A673 (cell line): ENCODE measurements at regions of chr6 and their contacts with region 1.

Region 1: DNA sequence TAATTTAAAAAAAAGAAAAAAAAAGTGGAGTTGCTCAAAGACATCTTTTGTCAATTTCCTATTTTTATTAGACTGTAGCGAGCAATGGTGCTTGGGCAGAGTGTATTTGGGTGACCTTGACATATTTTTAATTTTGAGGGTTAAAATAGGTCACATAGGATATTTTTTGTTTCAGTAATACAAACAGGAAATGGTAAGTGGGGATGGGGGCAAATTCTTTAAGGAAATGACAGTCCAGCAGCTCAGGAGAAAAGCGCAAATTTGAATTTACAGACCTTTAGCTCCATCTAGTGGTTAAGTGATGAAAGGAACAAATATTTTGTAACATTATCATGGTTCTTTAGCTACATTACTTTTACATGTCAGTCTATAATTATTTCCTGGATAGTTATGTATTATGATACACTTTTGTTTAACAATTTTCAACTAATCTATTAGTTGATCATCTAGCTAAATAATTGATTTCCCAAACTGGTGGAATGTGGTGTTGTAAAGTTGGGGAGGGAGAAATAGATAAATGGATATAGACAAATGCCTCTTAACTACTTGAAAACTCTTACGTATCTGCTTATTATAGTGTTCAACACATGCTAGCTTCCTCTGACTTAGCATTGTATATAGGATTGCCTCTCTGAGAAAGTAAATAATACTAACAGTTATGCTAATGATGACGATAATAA is 10.0 kb downstream of the CITED2 start:
- DNase-seq: peak; percentile 85
- H3K4me3 ChIP-seq: no peak overlapping the region
- H3K27ac ChIP-seq: peak overlapping the region; percentile 31
- H3K4me1 ChIP-seq: peaks cover 32% of the 10 kb centered on the region
- H3K27me3 ChIP-seq: no peaks in the 10 kb centered on the region
- CTCF ChIP-seq: peak; percentile 66

Region 2: GRCh38 chr6:138622967-138623366 is 741.5 kb before region 1 on chr6:
- CTCF ChIA-PET with region 1: no interaction called
- POLR2A ChIA-PET with region 1: no interaction called
- intact Hi-C with region 1: no loop called
- DNase-seq: no peak
- H3K4me3 ChIP-seq: no peak overlapping the region
- H3K27ac ChIP-seq: no peak overlapping the region
- H3K4me1 ChIP-seq: no peaks in the 10 kb centered on the region
- H3K27me3 ChIP-seq: no peaks in the 10 kb centered on the region
- CTCF ChIP-seq: no peak

Region 3: DNA sequence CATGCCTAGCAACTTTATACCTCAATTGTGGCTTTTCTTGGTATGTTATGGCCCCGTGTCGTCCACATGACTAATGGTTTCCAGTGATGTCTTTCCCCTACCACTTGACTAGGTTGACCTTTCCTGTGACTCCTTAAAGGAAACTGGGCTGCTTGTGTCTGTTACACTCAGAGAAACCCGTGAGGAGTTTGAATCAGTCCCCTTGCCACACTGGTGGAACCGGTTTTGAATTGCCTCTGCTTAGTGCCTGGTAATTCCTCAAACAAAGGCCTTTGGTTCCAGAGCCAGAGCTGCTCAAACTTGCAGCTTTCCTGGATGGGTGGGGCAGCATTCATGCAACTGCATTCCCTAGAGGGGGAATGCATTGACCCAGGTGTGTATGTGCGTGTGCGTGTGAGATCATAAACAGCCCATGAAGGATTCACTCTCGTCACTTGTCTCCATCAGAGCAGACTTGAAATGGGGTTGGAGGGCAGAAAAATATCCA is 546.6 kb before region 1 on chr6:
- CTCF ChIA-PET with region 1: interaction called, 4 read pairs
- POLR2A ChIA-PET with region 1: interaction called, 3 read pairs
- intact Hi-C with region 1: loop called (anchors 1 kb)
- DNase-seq: no peak
- H3K4me3 ChIP-seq: no peak overlapping the region
- H3K27ac ChIP-seq: no peak overlapping the region
- H3K4me1 ChIP-seq: no peaks in the 10 kb centered on the region
- H3K27me3 ChIP-seq: no peaks in the 10 kb centered on the region
- CTCF ChIP-seq: no peak

Region 4: DNA sequence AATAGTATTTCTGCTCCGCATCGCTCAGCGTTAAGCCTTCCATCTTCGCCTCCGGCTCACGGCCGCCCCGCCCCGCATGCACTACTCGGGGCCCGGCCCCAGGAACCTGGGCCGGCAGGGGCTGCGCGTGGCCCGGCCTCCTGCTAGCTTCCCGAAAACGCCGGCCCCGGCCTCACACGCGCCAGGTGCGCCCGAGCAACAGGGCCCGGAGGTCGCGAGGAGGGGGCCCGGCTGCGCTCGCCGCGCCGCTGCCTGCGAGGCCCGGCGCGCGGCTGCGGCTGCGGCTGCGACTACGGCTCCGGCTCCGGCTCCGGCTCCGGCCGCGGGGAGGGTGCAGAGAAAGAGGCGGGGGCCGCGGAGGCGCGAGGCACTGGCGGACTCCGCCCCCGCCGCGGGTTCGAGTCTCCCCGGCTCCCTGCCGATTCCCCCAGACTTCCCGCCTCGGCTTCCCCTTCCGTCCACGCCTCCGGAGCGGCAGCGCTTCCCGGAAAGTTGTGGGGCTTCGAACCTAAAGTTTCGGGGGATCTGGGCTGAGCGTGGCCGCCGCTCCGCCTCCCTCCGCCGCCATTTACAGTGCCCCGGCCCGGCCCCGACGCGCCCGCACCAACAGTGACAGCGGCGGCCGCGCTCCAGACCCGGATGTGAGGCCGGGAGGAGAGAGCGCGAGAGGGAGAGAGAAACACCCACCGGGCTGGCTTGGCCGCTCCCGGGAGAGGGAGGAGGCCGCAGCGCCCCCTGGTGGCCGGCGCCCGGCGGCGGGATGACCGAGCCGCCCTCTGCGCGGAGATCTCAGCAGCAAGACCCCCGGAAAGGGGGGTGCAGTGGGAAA is 376.6 kb before region 1 on chr6 and contains the start of gene REPS1:
- CTCF ChIA-PET with region 1: no interaction called
- POLR2A ChIA-PET with region 1: no interaction called
- intact Hi-C with region 1: loop called (anchors 10 kb)
- DNase-seq: peak; percentile 95
- H3K4me3 ChIP-seq: peak within 1 kb of the TSS; percentile 72
- H3K27ac ChIP-seq: peak within 1 kb of the TSS; percentile 91
- H3K4me1 ChIP-seq: peaks cover 13% of the 10 kb centered on the region
- H3K27me3 ChIP-seq: no peaks in the 10 kb centered on the region
- CTCF ChIP-seq: peak; percentile 95
- total RNA-seq, gene REPS1: 63.4 and 64.9 TPM in 2 replicates

Region 5: DNA sequence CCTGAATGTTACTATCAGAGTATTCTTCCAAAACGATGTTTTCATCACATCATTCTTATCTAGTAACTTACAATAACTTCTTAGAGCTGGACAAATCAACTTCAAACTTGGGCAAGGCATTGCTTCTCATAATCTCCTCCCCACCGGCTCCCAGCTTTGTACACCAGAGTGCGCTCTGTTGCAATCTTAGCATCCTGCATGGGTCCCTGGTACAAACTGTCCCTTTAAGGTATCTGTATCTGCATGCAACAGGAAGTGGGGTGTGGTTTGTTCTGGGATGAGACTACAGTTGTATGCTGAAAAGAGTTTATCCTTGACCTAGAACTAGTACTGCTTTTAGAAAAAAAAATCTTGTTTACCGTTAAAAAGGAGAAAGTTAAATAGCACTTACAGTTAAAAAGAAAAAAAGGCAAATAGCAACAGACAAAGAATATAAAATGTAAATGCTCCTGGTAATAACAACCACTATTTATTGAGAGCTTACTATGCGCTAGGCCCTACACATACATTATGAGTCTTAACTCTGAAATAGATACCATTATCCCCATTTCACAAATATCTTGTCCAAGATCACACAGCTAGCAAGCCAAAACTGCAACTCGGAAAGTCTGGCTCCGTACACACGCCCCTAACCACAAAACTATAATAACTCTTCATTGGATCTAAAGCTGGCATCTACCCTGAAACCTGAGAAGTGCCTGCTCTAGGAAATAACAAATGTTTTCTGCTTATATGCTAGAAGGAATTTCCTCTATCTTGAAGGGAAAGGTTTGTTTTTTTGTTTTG is 239.4 kb before region 1 on chr6:
- CTCF ChIA-PET with region 1: interaction called, 3 read pairs
- POLR2A ChIA-PET with region 1: no interaction called
- intact Hi-C with region 1: loop called (anchors 1 kb)
- DNase-seq: peak; percentile 83
- H3K4me3 ChIP-seq: no peak overlapping the region
- H3K27ac ChIP-seq: no peak overlapping the region
- H3K4me1 ChIP-seq: peaks cover 10% of the 10 kb centered on the region
- H3K27me3 ChIP-seq: no peaks in the 10 kb centered on the region
- CTCF ChIP-seq: peak; percentile 74

Region 6: DNA sequence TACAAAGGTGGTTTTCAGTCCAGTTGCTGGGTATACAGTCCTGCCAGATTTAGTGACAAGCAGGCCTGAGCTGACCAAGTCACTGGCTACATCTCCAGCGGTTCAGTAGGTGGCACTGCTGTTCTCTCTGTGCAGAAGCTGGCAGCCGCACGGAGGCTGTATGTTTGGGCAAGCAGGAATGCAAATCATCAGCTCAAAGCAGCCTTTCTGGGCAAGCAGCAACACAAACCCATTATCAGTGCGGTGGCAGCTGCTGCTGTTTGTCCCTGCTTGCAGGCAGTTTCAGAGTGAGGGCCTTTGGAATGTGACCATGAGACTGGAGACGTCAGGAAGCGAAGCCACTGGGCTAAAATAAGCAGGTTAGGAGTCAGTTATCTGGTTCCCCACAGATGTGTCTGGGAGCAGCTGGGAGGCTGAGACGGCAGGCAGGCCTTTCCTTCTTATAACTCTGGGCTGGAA is 145.1 kb before region 1 on chr6:
- CTCF ChIA-PET with region 1: interaction called, 21 read pairs
- POLR2A ChIA-PET with region 1: no interaction called
- intact Hi-C with region 1: loop called (anchors 1 kb)
- DNase-seq: peak; percentile 90
- H3K4me3 ChIP-seq: no peak overlapping the region
- H3K27ac ChIP-seq: peak overlapping the region; percentile 49
- H3K4me1 ChIP-seq: peaks cover 8% of the 10 kb centered on the region
- H3K27me3 ChIP-seq: no peaks in the 10 kb centered on the region
- CTCF ChIP-seq: peak; percentile 85